ENCODE measurements at regions of chr7 and their contacts with region 1.

Region 1: GRCh38 chr7:92854501-92855238 is 18.3 kb upstream of the CDK6 start:
- DNase-seq: peak in 1 of 2 donors; percentile 16
- H3K4me3 ChIP-seq: no peak overlapping the region
- H3K27ac ChIP-seq: no peak overlapping the region
- H3K4me1 ChIP-seq: no peaks in the 10 kb centered on the region
- H3K27me3 ChIP-seq: no peaks in the 10 kb centered on the region
- CTCF ChIP-seq: no peak
- EP300 ChIP-seq: no peak
- POLR2A ChIP-seq: no peak

Region 2: DNA sequence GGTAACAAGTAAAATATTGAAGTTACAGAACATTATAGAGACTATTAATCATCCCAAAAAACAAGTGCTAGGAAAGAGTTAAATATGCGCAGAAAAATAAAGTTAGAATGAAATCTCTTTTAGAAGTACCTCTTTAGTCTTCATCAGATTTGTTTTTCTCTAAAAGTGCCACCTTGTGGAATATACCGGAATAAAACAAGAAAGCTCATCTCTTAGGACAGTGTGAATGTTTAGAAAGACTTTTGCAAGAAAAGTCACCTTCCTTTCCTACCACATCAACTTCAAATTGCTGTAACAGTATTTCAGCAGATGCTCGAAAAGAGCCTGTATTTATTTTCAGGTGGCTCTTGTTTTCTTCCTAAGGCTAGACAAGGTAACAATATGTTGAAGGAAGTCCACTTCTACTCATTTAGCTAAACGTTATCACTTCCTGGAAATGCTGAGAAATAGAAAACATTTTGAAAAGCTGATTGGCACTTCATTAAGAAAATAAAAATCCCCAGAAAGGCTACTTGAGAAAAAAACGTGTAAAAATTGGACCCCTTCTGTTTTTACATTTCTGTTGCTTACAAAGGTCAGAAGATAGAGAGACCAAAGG is 244.7 kb before region 1 on chr7:
- intact Hi-C with region 1: loop called (anchors 10 kb)
- DNase-seq: peak in 1 of 2 donors; percentile 43
- H3K4me3 ChIP-seq: no peak overlapping the region
- H3K27ac ChIP-seq: no peak overlapping the region
- H3K4me1 ChIP-seq: peaks cover 0 to 8% (median 3%) of the 10 kb centered on the region in 4 donors
- H3K27me3 ChIP-seq: no peaks in the 10 kb centered on the region
- CTCF ChIP-seq: peak in 1 of 7 experiments; percentile 11
- EP300 ChIP-seq: no peak
- POLR2A ChIP-seq: no peak

Region 3: GRCh38 chr7:92925876-92926696 is 71.4 kb after region 1 on chr7:
- intact Hi-C with region 1: no loop called
- DNase-seq: peak in 1 of 2 donors; percentile 66
- H3K4me3 ChIP-seq: no peak overlapping the region
- H3K27ac ChIP-seq: no peak overlapping the region
- H3K4me1 ChIP-seq: peaks cover 0 to 6% (median 0%) of the 10 kb centered on the region in 4 donors
- H3K27me3 ChIP-seq: peaks cover 0 to 20% (median 0%) of the 10 kb centered on the region in 3 donors
- CTCF ChIP-seq: no peak
- EP300 ChIP-seq: no peak
- POLR2A ChIP-seq: no peak

Measured in stomach (tissue), 19 donors.